Mucosa of descending colon (tissue), 3 donors: ENCODE measurements at regions of chr9 and their contacts with region 1.

Region 1: DNA sequence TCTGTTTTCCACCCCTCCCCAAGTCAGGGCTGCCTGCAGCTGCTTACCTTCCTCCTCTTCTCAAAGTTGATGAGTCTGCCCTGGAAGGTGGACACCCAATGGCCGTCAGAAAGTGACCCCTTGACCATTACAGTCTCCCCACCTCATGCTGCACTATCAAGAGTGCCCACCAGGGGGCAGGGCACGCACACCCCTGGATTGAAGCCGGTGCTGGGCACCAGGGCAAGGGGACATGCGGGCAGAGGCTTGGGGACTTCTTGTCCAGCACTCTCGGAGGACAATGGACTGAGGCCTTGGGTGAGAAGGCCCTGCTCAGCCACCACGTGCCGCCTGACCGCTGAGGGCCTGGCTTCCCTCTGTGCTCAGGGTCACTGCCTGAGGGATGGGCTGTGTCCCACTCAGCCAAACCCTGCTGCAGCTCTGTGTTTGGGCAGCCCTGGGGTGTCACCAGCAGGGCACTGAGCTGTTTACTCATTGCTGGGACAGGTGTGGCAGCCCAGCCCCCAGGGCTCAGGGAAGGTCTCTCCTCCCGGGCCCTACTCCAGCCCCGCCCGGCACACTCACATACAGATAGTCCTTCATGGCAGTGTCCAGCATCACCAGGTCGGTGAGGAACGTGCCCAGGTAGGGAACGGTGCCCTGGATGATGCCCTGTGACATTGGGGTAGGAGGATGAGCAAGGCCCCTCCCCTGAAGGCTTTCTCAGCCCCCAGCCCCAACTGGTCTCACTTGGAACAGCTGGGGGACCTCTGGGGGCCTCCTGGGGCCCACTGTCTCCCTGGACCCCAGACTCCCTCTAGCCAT is 17.7 kb downstream of the RALGDS start:
- DNase-seq: peak; percentile 67 to 83 (median 82)
- ATAC-seq: peak; percentile 81
- H3K4me3 ChIP-seq: no peak overlapping the region
- H3K4me1 ChIP-seq: peaks cover 6% of the 10 kb centered on the region
- CTCF ChIP-seq: peak; percentile 93

Region 2: GRCh38 chr9:133144137-133144903 is 40.9 kb after region 1 on chr9:
- intact Hi-C with region 1: loop called (anchors 1 to 5 kb)
- DNase-seq: peak; percentile 76 to 94 (median 90)
- ATAC-seq: peak; percentile 62
- H3K4me3 ChIP-seq: no peak overlapping the region
- H3K4me1 ChIP-seq: peaks cover 71% of the 10 kb centered on the region
- CTCF ChIP-seq: peak; percentile 99

Region 3: GRCh38 chr9:133149126-133150107 is 46.0 kb after region 1 on chr9:
- intact Hi-C with region 1: loop called (anchors 1 to 5 kb)
- DNase-seq: peak; percentile 90 to 94 (median 93)
- ATAC-seq: peak; percentile 79
- H3K4me3 ChIP-seq: peak overlapping the region; percentile 39
- H3K4me1 ChIP-seq: peaks cover 22% of the 10 kb centered on the region
- CTCF ChIP-seq: peak; percentile 14